ENCODE measurements at regions of chr1 and their contacts with region 1.

Region 1: DNA sequence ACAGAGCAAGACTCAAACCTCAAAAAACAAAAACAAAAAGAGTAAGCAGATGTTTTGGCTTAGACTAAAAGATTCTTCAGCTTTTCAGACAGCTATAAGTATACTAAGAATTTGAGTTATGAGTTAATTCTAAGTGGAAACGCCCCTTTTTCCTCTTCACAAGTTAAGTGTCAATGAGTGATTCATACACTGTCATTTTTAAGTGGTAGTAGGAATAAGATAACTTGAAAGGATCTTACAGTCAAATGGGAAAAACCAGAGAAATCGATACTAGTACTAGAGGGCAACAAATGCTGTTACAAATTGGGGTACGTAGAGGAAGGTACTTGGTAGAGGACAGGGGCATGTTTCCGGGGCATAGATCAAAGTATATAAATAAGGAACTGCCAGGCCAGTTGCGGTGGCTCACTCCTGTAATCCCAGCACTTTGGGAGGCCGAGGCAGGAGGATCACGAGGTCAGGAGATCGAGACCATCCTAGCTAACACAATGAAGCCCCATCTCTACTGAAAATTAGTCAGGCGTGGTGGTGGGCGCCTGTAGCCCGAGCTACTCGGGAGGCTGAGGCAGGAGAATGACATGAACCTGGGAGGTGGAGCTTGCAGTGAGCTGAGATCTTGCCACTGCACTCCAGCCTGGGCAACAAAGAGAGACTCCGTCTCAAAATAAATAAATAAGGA is 7.4 kb downstream of the H3-3A start:
- DNase-seq: no peak
- ATAC-seq: no peak
- H3K4me3 ChIP-seq: no peak overlapping the region
- H3K27ac ChIP-seq: no peak overlapping the region
- H3K4me1 ChIP-seq: peaks cover 0 to 2% of the 10 kb centered on the region in 2 donors
- H3K27me3 ChIP-seq: no peaks in the 10 kb centered on the region

Region 2: GRCh38 chr1:226109829-226110248 is 39.9 kb after region 1 on chr1:
- intact Hi-C with region 1: loop called in 1 of 2 experiments (anchors 5 kb)
- DNase-seq: peak; percentile 95 to 97
- ATAC-seq: peak; percentile 93
- H3K4me3 ChIP-seq: peak overlapping the region; percentile 66 to 67
- H3K27ac ChIP-seq: peak overlapping the region; percentile 94 to 97
- H3K4me1 ChIP-seq: peaks cover 0 to 4% of the 10 kb centered on the region in 2 donors
- H3K27me3 ChIP-seq: no peaks in the 10 kb centered on the region

Region 3: GRCh38 chr1:227120826-227121225 is 1050.9 kb after region 1 on chr1:
- intact Hi-C with region 1: no loop called
- DNase-seq: no peak
- ATAC-seq: no peak
- H3K4me3 ChIP-seq: no peak overlapping the region
- H3K27ac ChIP-seq: no peak overlapping the region
- H3K4me1 ChIP-seq: no peaks in the 10 kb centered on the region
- H3K27me3 ChIP-seq: no peaks in the 10 kb centered on the region

Measured in aorta (tissue), 5 donors.